ENCODE measurements at regions of chr1 and their contacts with region 1.

Region 1: GRCh38 chr1:150092180-150092791 is 24.7 kb downstream of the VPS45 start:
- DNase-seq: no peak
- ATAC-seq: peak; percentile 83
- H3K4me3 Mint-ChIP-seq: peak overlapping the region; percentile 65
- H3K27ac Mint-ChIP-seq: peak overlapping the region; percentile 93
- H3K4me1 Mint-ChIP-seq: peaks cover 37% of the 10 kb centered on the region
- H3K27me3 Mint-ChIP-seq: no peaks in the 10 kb centered on the region

Region 2: GRCh38 chr1:150106341-150106740 is 14.1 kb after region 1 on chr1:
- POLR2A ChIA-PET with region 1: interaction called, 26 read pairs
- DNase-seq: no peak
- ATAC-seq: peak; percentile 77
- H3K4me3 Mint-ChIP-seq: peak overlapping the region; percentile 75
- H3K27ac Mint-ChIP-seq: peak overlapping the region; percentile 90
- H3K4me1 Mint-ChIP-seq: peaks cover 67% of the 10 kb centered on the region
- H3K27me3 Mint-ChIP-seq: no peaks in the 10 kb centered on the region